Activated B cell treated with CpG ODN at 0.5 μM for 24 hours (primary cell): ENCODE measurements at regions of chr15 and their contacts with region 1.

Region 1: GRCh38 chr15:77024271-77025082 is 29.6 kb downstream of the PSTPIP1 start:
- DNase-seq: peak; percentile 69
- ATAC-seq: peak; percentile 78
- H3K4me3 Mint-ChIP-seq: no peak overlapping the region
- H3K27ac Mint-ChIP-seq: no peak overlapping the region
- H3K4me1 Mint-ChIP-seq: peaks cover 25% of the 10 kb centered on the region
- H3K27me3 Mint-ChIP-seq: no peaks in the 10 kb centered on the region
- CTCF ChIP-seq: peak; percentile 97

Region 2: GRCh38 chr15:76885212-76885611 is 139.3 kb before region 1 on chr15:
- CTCF ChIA-PET with region 1: no interaction called
- POLR2A ChIA-PET with region 1: no interaction called
- intact Hi-C with region 1: no loop called
- DNase-seq: no peak
- ATAC-seq: no peak
- H3K4me3 Mint-ChIP-seq: no peak overlapping the region
- H3K27ac Mint-ChIP-seq: no peak overlapping the region
- H3K4me1 Mint-ChIP-seq: peaks cover 6% of the 10 kb centered on the region
- H3K27me3 Mint-ChIP-seq: no peaks in the 10 kb centered on the region
- CTCF ChIP-seq: no peak

Region 3: DNA sequence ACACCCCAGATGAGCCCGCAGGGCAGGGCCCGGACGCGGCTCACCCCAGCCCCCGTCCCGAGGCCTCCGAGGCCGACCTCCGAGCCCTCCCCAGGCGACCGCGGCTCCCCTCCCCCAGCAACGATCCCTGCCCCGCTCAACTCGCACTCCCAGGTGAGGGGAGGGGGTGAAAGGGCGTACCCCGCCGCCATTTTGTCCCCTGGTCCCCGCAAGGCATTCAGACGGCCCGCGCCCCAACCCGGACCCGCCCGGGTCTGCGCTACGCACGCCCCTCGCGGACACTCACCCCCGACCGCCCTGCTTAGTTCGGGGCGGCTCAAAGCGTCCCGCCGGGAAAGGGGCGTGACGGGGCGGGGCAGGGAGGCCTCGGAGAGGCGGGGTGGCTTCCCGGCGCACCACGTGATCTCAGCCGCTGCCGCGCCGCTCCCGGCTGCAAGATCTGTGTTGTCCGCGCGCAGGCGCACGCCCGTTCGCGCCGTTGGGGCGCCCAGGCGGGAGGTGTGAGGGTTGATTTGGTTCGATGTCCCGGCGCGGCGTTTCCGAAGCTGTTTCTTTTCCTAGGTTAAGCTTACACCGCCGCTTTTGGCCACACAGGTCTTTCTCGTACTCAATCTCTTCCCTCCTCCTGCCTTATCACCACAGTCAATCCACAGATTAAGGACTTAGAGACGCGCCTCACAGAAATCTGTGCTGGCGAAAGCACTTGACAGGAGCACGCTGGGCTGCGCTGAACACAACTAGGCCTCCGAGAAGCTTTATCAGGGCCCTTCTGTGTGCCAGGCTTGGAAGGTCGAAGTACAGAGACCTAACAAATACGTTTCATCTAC is 119.3 kb before region 1 on chr15 and contains the start of gene SCAPER:
- CTCF ChIA-PET with region 1: interaction called, 29 read pairs
- POLR2A ChIA-PET with region 1: interaction called, 4 read pairs
- intact Hi-C with region 1: loop called (anchors 1 kb)
- DNase-seq: peak; percentile 92
- ATAC-seq: peak; percentile 86
- H3K4me3 Mint-ChIP-seq: peak within 1 kb of the TSS; percentile 94
- H3K27ac Mint-ChIP-seq: peak within 1 kb of the TSS; percentile 87
- H3K4me1 Mint-ChIP-seq: peaks cover 48% of the 10 kb centered on the region
- H3K27me3 Mint-ChIP-seq: no peaks in the 10 kb centered on the region
- CTCF ChIP-seq: no peak
- total RNA-seq, gene SCAPER: 28.9 and 38.8 TPM in 2 replicates

Region 4: GRCh38 chr15:76916369-76916768 is 108.1 kb before region 1 on chr15:
- CTCF ChIA-PET with region 1: no interaction called
- POLR2A ChIA-PET with region 1: no interaction called
- intact Hi-C with region 1: no loop called
- DNase-seq: no peak
- ATAC-seq: no peak
- H3K4me3 Mint-ChIP-seq: no peak overlapping the region
- H3K27ac Mint-ChIP-seq: no peak overlapping the region
- H3K4me1 Mint-ChIP-seq: no peaks in the 10 kb centered on the region
- H3K27me3 Mint-ChIP-seq: peaks cover 21% of the 10 kb centered on the region
- CTCF ChIP-seq: no peak

Region 5: DNA sequence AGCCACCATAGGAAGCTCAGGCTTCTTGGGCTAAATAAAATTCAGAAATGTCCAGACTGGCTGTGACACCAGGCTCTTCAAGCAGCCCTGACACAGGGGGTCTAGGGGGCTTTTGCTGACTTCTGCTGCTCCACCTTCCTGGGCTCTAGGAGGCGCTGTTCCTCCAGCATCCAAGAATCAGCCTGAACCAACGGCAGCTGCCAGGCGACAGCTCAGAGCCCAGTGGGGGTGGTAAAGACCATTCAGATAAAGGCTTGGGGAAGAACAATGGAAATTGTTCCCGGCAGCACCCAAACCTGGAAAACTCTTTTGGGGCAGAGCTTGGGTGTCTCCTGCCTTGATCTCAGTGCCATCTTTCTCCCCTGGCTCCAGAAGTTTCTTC is 51.1 kb before region 1 on chr15:
- CTCF ChIA-PET with region 1: interaction called, 16 read pairs
- POLR2A ChIA-PET with region 1: no interaction called
- intact Hi-C with region 1: no loop called
- DNase-seq: no peak
- ATAC-seq: no peak
- H3K4me3 Mint-ChIP-seq: no peak overlapping the region
- H3K27ac Mint-ChIP-seq: no peak overlapping the region
- H3K4me1 Mint-ChIP-seq: peaks cover 6% of the 10 kb centered on the region
- H3K27me3 Mint-ChIP-seq: no peaks in the 10 kb centered on the region
- CTCF ChIP-seq: no peak

Region 6: GRCh38 chr15:77118882-77119321 is 94.4 kb after region 1 on chr15:
- CTCF ChIA-PET with region 1: interaction called, 3 read pairs
- POLR2A ChIA-PET with region 1: no interaction called
- intact Hi-C with region 1: loop called (anchors 1 kb)
- DNase-seq: no peak
- ATAC-seq: peak; percentile 62
- H3K4me3 Mint-ChIP-seq: no peak overlapping the region
- H3K27ac Mint-ChIP-seq: no peak overlapping the region
- H3K4me1 Mint-ChIP-seq: peaks cover 40% of the 10 kb centered on the region
- H3K27me3 Mint-ChIP-seq: no peaks in the 10 kb centered on the region
- CTCF ChIP-seq: no peak

Region 7: DNA sequence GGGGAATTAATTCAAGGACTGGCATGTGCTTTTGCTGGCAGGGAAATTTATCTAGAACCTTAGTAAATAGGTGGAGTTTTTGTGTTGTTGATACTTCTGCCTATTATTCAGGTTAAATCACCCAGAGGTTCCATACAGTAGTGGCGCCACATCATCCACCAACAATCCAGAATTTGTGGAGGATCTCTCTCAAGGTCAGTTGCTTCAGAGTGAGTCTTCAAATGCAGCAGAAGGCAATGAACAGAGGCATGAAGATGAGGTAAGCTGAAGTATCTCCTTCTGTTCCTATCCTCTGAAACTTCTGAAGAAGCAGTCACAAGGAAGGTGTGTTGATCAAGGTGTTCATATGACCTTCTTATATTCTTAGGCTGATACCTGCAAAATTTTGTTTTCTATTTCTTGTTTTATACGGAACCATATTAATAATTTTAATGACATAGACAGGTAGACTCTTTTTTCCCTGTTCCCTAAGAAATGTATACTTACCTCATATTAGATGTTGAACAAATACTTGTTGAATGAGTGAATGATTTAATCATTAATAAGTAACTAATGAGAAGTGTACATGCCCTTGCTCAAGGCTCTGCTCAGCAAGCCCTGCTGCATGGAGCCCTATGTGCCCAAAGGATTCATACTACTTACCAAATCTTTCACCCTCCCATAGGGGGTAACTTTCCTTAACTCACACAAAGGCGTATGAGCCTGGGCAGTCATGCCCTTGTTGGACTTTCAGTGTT is 439.8 kb after region 1 on chr15:
- CTCF ChIA-PET with region 1: no interaction called
- POLR2A ChIA-PET with region 1: no interaction called
- intact Hi-C with region 1: no loop called
- DNase-seq: no peak
- ATAC-seq: no peak
- H3K4me3 Mint-ChIP-seq: no peak overlapping the region
- H3K27ac Mint-ChIP-seq: no peak overlapping the region
- H3K4me1 Mint-ChIP-seq: no peaks in the 10 kb centered on the region
- H3K27me3 Mint-ChIP-seq: no peaks in the 10 kb centered on the region
- CTCF ChIP-seq: no peak

Region 8: DNA sequence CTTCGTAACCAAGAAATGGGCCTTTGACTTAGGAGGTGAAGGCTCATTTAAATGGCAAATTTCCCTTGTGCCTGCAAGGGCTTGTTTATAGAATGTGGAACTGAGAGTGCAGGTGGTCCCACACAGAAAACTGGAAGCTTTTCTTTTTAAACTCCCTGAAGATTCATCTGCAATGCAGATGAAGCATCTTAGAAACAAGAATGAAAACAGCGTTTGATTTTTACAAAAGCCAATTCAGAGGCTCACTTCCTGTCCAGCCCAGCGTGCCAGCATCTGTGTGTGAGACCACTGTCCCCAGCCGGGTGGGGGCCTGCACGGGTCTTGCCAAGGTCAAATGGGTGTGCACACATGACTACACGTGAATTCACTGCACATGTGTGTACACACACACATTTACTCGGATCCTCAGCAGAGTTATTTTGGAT is 513.6 kb after region 1 on chr15:
- CTCF ChIA-PET with region 1: interaction called, 13 read pairs
- POLR2A ChIA-PET with region 1: no interaction called
- intact Hi-C with region 1: loop called (anchors 1 kb)
- DNase-seq: peak; percentile 34
- ATAC-seq: peak; percentile 85
- H3K4me3 Mint-ChIP-seq: peak overlapping the region; percentile 67
- H3K27ac Mint-ChIP-seq: peak overlapping the region; percentile 86
- H3K4me1 Mint-ChIP-seq: peaks cover 64% of the 10 kb centered on the region
- H3K27me3 Mint-ChIP-seq: no peaks in the 10 kb centered on the region
- CTCF ChIP-seq: no peak